Cardiac septum (tissue), 1 donor: ENCODE measurements at regions of chr4 and their contacts with region 1.

Region 1: DNA sequence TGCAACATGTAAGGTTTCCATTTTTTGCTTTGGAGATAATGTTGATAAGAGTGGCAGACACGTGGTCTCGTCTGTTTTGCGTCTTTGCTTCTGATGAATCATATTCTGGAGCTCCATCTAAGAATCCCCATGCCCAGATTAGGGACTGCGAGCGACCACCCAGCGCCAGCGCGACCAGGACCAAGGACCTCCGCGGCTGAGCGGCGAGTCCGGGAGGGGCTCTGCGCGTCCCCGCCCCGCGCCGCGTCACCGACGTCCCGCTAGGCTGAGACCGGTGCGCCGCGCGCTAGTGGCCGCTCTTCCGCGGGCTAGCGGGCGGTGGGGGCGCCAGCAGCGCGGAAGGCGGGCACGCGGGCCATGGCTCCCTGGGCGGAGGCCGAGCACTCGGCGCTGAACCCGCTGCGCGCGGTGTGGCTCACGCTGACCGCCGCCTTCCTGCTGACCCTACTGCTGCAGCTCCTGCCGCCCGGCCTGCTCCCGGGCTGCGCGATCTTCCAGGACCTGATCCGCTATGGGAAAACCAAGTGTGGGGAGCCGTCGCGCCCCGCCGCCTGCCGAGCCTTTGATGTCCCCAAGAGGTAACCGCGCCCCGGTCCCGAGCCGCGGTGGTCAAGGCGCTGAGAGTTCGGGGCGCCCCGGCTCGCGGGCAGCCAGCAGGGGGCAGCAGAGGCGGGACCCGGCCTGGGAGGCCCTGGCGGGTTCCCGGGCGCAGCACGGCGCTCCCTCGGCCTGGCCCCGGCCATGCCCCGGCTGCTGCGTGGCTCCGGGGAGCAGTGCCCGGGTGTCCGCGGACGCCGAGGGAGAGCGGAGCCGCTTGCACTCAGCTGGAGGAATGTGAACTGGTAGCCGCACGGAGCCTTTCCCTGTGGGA is at the start of gene SRD5A3:
- DNase-seq: peak; percentile 93
- total RNA-seq, gene SRD5A3: 7.3 TPM

Region 2: GRCh38 chr4:54746218-54746617 is 600.0 kb before region 1 on chr4:
- intact Hi-C with region 1: no loop called
- DNase-seq: no peak

Region 3: GRCh38 chr4:55358668-55359067 is 12.5 kb after region 1 on chr4:
- intact Hi-C with region 1: no loop called
- DNase-seq: no peak

Region 4: DNA sequence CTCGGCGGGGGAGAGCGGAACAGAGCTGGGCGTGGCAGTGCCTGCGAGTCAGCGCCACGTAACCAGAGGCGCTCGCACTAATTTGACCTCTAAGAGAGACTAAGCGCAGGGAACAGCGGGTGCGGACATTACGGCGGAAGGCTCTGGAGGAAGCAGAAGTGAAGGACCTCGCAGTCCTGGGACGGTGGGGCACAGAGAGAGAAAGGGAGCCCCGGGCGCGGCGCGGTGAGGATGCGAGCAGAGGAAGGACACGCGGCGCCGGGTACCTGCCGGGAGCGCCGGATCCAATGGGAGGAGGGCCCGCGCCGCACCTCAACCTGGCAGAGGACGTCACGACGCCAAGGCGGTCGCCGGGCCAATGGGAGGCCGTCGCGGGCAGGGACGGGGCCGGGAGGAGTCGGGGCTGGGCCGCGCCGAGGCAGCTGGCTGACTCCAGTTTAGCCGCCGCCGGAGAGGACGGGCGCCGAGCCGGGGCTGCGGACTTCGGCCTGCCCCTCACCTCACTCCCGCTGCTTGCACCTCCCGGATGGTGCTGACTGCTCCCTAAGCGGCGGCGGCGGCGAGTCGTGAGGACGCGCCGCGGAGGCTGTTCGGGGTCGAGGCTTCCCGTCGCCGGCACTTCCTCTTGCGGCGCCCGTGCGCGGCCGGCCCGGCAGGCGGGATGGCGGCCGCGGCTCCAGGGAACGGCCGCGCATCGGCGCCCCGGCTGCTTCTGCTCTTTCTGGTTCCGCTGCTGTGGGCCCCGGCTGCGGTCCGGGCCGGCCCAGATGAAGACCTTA is 49.5 kb after region 1 on chr4 and contains the start of gene TMEM165:
- intact Hi-C with region 1: loop called (anchors 1 kb)
- DNase-seq: peak; percentile 97
- total RNA-seq, gene TMEM165: 56.4 TPM

Region 5: DNA sequence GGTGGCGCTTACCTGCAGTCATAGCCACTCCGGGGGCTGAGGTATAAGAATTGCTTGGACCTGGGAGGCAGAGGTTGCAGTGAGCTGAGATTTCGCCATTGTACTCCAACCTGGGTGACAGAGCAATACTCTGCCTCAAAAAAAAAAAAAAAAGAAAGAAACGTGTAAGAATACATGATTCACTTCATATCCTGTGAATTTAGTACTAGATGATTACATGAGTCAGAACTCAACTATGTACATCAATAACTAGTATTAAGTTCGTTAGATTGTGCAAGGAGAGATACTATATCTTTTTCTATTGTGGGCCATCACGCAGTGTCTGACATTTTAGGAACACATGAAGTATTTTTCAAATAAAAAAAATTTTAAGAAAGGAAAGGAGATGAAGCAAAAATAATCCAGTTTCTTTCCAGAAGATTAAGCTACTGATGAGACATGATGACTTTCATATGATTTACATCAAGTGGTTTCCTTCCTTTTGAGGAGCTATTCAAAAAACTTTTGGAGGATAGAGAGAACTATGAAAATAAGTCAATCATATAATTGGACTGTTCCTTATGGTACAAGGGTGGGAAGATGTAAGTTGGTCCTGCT is 408.6 kb after region 1 on chr4:
- intact Hi-C with region 1: no loop called
- DNase-seq: no peak

Region 6: DNA sequence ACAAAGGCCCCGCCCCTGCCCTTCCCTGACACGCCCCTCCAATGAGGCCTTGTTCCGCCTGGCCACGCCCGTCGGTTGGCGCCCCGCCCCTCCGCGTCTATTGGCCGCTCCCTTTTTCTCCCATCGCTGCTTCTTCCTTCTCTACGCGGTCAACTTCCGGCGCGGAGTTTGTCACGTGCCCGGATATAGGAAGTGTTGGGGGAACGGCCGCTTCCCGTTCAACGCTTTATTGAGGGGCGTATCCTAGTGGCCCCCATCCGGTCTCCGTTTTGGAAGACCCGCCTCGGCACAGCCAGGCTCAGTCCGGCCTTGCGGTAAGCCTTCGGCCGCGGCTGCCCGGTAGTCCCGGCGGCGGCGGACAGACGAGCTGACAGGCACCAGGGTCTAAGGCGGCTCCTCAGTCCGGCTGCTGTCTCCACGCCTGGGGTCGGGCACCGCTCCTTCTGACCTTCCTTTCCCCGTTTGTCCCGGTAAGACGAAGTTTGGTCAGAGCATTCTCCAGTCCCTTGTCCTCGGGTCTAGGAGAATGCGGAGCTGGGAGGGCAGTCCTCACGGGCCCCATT is 507.4 kb after region 1 on chr4 and contains the start of gene EXOC1:
- intact Hi-C with region 1: loop called (anchors 5 kb)
- DNase-seq: peak; percentile 98
- total RNA-seq, gene EXOC1: 26.6 TPM